Endothelial cell of umbilical vein (primary cell): ENCODE measurements at regions of chrX and their contacts with region 1.

Region 1: GRCh38 chrX:26649534-26649933 is 433.6 kb downstream of the MAGEB5 start:
- DNase-seq: no peak
- H3K4me3 ChIP-seq: no peak overlapping the region
- H3K27ac ChIP-seq: no peak overlapping the region
- H3K4me1 ChIP-seq: no peaks in the 10 kb centered on the region
- H3K27me3 ChIP-seq: no peaks in the 10 kb centered on the region
- CTCF ChIP-seq: peak; percentile 8 to 21
- POLR2A ChIP-seq: no peak

Region 2: GRCh38 chrX:26442340-26442739 is 207.2 kb before region 1 on chrX:
- CTCF ChIA-PET with region 1: interaction called, 14 read pairs
- POLR2A ChIA-PET with region 1: no interaction called
- dilution Hi-C with region 1: no loop called
- intact Hi-C with region 1: loop called (anchors 5 kb)
- DNase-seq: peak; percentile 68
- H3K4me3 ChIP-seq: no peak overlapping the region
- H3K27ac ChIP-seq: no peak overlapping the region
- H3K4me1 ChIP-seq: no peaks in the 10 kb centered on the region
- H3K27me3 ChIP-seq: no peaks in the 10 kb centered on the region
- CTCF ChIP-seq: peak in 1 of 2 donors; percentile 39
- POLR2A ChIP-seq: no peak

Region 3: GRCh38 chrX:26664919-26665318 is 15.4 kb after region 1 on chrX:
- CTCF ChIA-PET with region 1: no interaction called
- POLR2A ChIA-PET with region 1: no interaction called
- dilution Hi-C with region 1: no loop called
- intact Hi-C with region 1: loop called (anchors 1 kb)
- DNase-seq: no peak
- H3K4me3 ChIP-seq: no peak overlapping the region
- H3K27ac ChIP-seq: no peak overlapping the region
- H3K4me1 ChIP-seq: no peaks in the 10 kb centered on the region
- H3K27me3 ChIP-seq: no peaks in the 10 kb centered on the region
- CTCF ChIP-seq: no peak
- POLR2A ChIP-seq: no peak

Region 4: DNA sequence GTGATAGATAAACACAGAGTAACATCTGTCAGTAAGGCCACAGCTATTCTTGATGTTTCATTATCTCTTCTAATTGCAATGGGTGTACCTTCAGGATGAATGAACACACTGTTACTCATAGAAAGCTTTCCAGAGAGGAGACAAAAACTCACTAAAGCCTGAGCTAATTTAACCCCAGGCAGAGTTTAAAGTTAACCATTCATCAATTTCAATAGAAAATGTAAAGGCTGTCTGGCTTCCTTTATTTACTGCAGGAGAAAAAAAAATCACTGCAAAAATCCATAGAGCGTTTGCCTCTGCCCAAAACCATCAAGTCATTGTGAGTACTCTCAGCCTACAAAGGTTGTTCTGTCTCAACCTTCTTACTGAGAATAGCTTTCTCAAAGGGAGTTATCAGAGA is 436.7 kb after region 1 on chrX:
- CTCF ChIA-PET with region 1: no interaction called
- POLR2A ChIA-PET with region 1: no interaction called
- dilution Hi-C with region 1: no loop called
- intact Hi-C with region 1: no loop called
- DNase-seq: no peak
- H3K4me3 ChIP-seq: no peak overlapping the region
- H3K27ac ChIP-seq: no peak overlapping the region
- H3K4me1 ChIP-seq: no peaks in the 10 kb centered on the region
- H3K27me3 ChIP-seq: no peaks in the 10 kb centered on the region
- CTCF ChIP-seq: no peak
- POLR2A ChIP-seq: no peak